PC-3 (cell line): ENCODE measurements at regions of chr11 and their contacts with region 1.

Region 1: GRCh38 chr11:102268329-102269193 is 48.7 kb upstream of the BIRC3 start:
- DNase-seq: peak; percentile 98
- ATAC-seq: peak; percentile 97
- H3K4me3 ChIP-seq: peak overlapping the region; percentile 85
- H3K27ac ChIP-seq: peak overlapping the region; percentile 65
- H3K4me1 ChIP-seq: peaks cover 33% of the 10 kb centered on the region
- H3K27me3 ChIP-seq: no peaks in the 10 kb centered on the region
- CTCF ChIP-seq: peak; percentile 73

Region 2: GRCh38 chr11:102139081-102139498 is 129.5 kb before region 1 on chr11:
- CTCF ChIA-PET with region 1: no interaction called
- POLR2A ChIA-PET with region 1: no interaction called
- intact Hi-C with region 1: loop called (anchors 5 kb)
- DNase-seq: peak; percentile 89
- ATAC-seq: peak; percentile 80
- H3K4me3 ChIP-seq: peak overlapping the region; percentile 48
- H3K27ac ChIP-seq: peak overlapping the region; percentile 85
- H3K4me1 ChIP-seq: peaks cover 25% of the 10 kb centered on the region
- H3K27me3 ChIP-seq: no peaks in the 10 kb centered on the region
- CTCF ChIP-seq: no peak

Region 3: GRCh38 chr11:102177974-102178631 is 90.5 kb before region 1 on chr11:
- CTCF ChIA-PET with region 1: interaction called, 4 read pairs
- POLR2A ChIA-PET with region 1: no interaction called
- intact Hi-C with region 1: loop called (anchors 1 kb)
- DNase-seq: peak; percentile 99
- ATAC-seq: peak; percentile 90
- H3K4me3 ChIP-seq: peak overlapping the region; percentile 26; the same call in 1 of the 2 replicates
- H3K27ac ChIP-seq: peak overlapping the region; percentile 80
- H3K4me1 ChIP-seq: peaks cover 27% of the 10 kb centered on the region
- H3K27me3 ChIP-seq: no peaks in the 10 kb centered on the region
- CTCF ChIP-seq: no peak

Region 4: GRCh38 chr11:102214623-102215022 is 53.9 kb before region 1 on chr11:
- CTCF ChIA-PET with region 1: no interaction called
- POLR2A ChIA-PET with region 1: no interaction called
- intact Hi-C with region 1: no loop called
- DNase-seq: no peak
- ATAC-seq: no peak
- H3K4me3 ChIP-seq: no peak overlapping the region
- H3K27ac ChIP-seq: no peak overlapping the region
- H3K4me1 ChIP-seq: no peaks in the 10 kb centered on the region
- H3K27me3 ChIP-seq: no peaks in the 10 kb centered on the region
- CTCF ChIP-seq: no peak

Region 5: DNA sequence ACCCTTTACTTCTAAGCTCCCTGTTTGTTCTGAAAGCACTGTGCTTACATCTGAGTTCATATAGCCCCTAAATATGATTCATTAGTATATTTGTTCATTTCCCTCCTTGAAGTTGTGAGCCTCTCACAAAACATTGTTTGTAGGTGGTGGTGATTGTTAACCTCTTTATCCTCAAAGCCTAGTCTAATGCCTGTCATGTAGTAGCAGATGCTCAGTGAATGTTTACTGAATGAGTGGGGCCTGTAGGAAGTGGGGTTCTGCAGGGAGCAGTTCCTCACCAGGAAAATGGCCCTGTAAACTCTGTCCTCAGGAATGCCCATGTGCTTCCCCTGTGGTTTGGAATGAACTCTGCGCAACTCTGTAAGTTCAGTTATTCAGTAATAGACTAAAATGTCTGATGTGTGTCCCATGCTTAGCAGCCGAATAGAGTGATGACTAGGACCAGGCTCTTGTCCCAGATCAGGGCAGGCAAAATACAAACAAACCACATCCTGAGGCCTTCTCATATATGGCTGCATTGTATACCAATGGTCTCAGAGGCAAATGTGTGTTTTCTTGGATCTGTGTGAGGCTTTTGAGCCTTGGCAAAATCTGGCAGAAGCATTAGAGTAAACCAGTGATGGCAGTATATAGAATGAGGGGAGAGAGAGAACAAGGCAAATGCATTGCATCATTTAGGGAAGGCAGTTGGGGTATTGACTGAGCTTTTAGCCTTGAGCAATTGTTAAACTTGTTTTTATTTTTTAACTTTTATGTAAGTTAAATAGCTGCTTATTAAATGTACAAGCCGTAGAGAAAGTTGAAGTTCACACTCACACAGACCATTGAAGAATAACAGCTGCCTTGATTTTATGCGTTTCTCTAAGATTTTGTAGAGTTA is 42.6 kb before region 1 on chr11:
- CTCF ChIA-PET with region 1: interaction called, 3 read pairs
- POLR2A ChIA-PET with region 1: interaction called, 7 read pairs
- intact Hi-C with region 1: loop called (anchors 1 kb)
- DNase-seq: peak; percentile 87
- ATAC-seq: peak; percentile 93
- H3K4me3 ChIP-seq: peak overlapping the region; percentile 51
- H3K27ac ChIP-seq: peak overlapping the region; percentile 64
- H3K4me1 ChIP-seq: peaks cover 47% of the 10 kb centered on the region
- H3K27me3 ChIP-seq: no peaks in the 10 kb centered on the region
- CTCF ChIP-seq: no peak

Region 6: DNA sequence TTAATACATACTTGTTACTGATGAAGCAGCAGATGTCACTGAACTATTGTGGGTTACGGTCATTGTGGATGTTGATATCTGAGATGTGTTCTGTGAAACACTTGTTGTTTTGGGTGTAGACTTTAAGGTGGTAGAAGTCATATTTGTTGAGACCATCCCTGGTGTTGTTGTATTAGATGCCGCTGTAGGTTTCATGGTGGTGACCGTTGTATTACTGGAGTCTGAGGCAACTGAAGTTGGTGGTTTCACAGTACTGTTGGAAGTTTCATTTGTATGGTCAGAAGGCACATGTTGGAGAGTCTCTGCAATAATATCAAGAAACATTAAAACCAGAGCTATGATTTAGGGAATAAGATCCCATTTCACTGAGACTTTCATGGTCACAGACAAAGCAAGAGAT is 133.3 kb after region 1 on chr11:
- CTCF ChIA-PET with region 1: no interaction called
- POLR2A ChIA-PET with region 1: no interaction called
- intact Hi-C with region 1: no loop called
- DNase-seq: no peak
- ATAC-seq: no peak
- H3K4me3 ChIP-seq: no peak overlapping the region
- H3K27ac ChIP-seq: no peak overlapping the region
- H3K4me1 ChIP-seq: no peaks in the 10 kb centered on the region
- H3K27me3 ChIP-seq: no peaks in the 10 kb centered on the region
- CTCF ChIP-seq: no peak

Region 7: DNA sequence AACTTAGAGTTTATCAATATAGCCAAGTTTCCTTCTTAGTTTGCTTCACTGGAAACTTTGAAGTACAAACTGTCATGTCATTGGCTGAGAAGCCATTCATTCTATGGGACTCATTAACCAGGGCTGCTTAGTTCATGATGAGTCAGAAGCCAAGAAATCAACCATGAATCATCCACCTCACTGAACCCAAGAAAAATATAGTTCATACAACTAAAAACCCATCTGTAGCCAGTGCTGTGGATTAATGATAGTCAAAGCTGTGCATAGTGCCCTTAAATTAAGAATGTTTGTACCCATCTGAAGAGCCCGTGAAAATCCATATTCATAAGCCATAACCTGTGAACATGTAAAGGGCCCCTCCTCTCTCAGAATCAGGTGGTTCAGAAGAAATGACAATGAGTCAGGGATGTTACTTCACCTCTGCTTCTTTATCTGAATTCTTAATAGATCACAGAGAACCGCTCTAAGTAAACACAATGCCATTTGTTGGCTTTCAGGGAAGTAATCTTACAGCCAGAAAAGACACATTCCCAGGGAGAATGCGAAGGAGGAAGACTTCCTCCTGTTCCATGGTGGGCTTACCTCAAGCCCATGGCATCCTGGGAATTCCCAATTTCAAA is 331.2 kb after region 1 on chr11:
- CTCF ChIA-PET with region 1: interaction called, 12 read pairs
- POLR2A ChIA-PET with region 1: no interaction called
- intact Hi-C with region 1: no loop called
- DNase-seq: peak; percentile 96
- ATAC-seq: peak; percentile 96
- H3K4me3 ChIP-seq: peak overlapping the region; percentile 41; the same call in 1 of the 2 replicates
- H3K27ac ChIP-seq: peak overlapping the region; percentile 91
- H3K4me1 ChIP-seq: peaks cover 30% of the 10 kb centered on the region
- H3K27me3 ChIP-seq: no peaks in the 10 kb centered on the region
- CTCF ChIP-seq: no peak